ENCODE measurements at regions of chr11 and their contacts with region 1.

Region 1: DNA sequence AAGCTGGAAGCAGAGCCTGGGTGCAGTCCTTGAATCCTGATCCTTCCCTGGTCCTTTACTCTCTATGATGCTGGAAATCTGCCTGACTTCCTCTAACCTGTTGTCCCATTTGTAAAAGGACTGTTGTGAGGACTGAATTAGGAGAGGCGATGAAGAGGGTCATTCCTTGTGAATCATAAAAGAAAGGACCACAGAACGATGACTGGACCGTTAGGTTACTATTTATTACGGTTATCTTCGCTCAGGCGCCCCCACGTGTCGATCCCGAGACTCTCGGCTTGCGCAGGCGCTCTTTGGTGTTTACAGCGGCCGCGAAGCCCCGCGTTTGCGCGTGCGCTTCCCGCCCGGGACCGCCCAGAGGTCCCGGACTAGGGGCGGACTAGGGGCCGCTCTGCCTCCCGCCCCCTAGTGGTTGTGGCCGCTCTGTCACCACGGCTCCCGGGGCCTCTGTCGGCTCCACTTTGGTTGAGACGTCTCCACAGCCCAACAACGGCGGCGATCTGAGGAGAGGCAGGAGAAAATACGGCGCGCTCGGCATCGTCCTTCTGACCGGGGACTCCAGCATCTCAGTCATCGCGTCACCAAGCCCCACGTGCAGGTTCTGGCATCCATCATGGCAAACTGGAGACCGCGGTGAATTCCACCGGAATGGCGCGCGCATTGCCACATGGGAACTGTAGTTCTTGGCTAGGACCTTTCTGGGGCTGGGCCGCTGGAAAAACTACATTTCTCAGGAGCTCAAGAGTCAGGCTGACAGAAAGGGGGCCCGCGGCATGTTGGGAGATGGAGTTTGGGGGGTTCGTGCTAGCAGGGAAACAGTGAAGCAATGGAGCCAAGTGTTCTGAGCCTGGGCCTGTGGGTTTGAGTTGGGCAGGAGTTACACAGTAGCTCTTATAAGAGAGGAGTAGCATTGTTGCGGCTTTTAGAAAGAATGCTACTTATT is at the start of gene STARD10:
- DNase-seq: peak; percentile 94
- ATAC-seq: peak; percentile 93
- H3K4me3 Mint-ChIP-seq: peak within 1 kb of the TSS; percentile 99
- H3K27ac Mint-ChIP-seq: peak within 1 kb of the TSS; percentile 100
- H3K4me1 Mint-ChIP-seq: peaks cover 34% of the 10 kb centered on the region
- H3K27me3 Mint-ChIP-seq: no peaks in the 10 kb centered on the region
- CTCF ChIP-seq: peak; percentile 81
- total RNA-seq, gene STARD10: 42.6 and 46.8 TPM in 2 replicates

Region 2: GRCh38 chr11:72730243-72730642 is 63.5 kb before region 1 on chr11:
- CTCF ChIA-PET with region 1: interaction called, 144 read pairs
- POLR2A ChIA-PET with region 1: interaction called, 57 read pairs
- intact Hi-C with region 1: loop called (anchors 1 kb)
- DNase-seq: no peak
- ATAC-seq: no peak
- H3K4me3 Mint-ChIP-seq: no peak overlapping the region
- H3K27ac Mint-ChIP-seq: peak overlapping the region; percentile 75
- H3K4me1 Mint-ChIP-seq: peaks cover 73% of the 10 kb centered on the region
- H3K27me3 Mint-ChIP-seq: no peaks in the 10 kb centered on the region
- CTCF ChIP-seq: no peak

Region 3: GRCh38 chr11:72752088-72752914 is 41.4 kb before region 1 on chr11 and contains the start of gene ARAP1:
- CTCF ChIA-PET with region 1: interaction called, 3 read pairs
- POLR2A ChIA-PET with region 1: interaction called, 3 read pairs
- intact Hi-C with region 1: loop called (anchors 1 kb)
- DNase-seq: peak; percentile 74
- ATAC-seq: peak; percentile 89
- H3K4me3 Mint-ChIP-seq: peak within 1 kb of the TSS; percentile 91
- H3K27ac Mint-ChIP-seq: peak within 1 kb of the TSS; percentile 89
- H3K4me1 Mint-ChIP-seq: peaks cover 53% of the 10 kb centered on the region
- H3K27me3 Mint-ChIP-seq: no peaks in the 10 kb centered on the region
- CTCF ChIP-seq: no peak
- total RNA-seq, gene ARAP1: 113 and 139 TPM in 2 replicates

Region 4: DNA sequence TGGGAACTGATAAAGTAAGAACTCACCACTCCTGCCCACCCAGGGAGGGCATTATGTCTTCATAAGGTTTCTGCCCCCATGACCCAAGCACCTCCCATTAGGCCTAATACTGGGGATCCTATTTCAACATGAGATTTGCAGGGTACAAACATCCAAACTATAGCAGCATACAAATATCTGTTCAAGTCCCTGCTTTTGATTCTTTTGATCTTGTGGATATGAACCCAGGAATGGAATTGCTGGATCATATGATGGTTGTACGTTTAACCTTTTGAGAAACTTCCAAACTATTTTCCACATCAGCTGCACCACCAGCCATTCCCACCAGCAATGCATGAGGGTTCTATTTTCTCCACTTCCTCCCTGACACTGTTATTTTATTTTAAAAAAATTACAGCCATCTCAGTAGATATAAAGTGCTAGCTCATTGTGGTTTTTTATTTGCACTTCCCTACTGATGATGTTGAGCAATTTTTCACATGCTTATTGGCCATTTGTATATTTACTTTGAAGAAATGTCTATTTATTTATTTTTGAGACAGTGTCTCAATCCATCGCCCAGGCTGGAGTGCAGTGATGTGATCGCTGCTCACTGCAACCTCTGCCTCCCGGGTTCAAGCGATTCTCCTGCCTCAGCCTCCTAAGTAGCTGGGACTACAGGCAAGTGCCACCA is 13.5 kb after region 1 on chr11:
- CTCF ChIA-PET with region 1: interaction called, 4 read pairs
- POLR2A ChIA-PET with region 1: interaction called, 12 read pairs
- intact Hi-C with region 1: no loop called
- DNase-seq: no peak
- ATAC-seq: peak; percentile 36
- H3K4me3 Mint-ChIP-seq: no peak overlapping the region
- H3K27ac Mint-ChIP-seq: no peak overlapping the region
- H3K4me1 Mint-ChIP-seq: peaks cover 26% of the 10 kb centered on the region
- H3K27me3 Mint-ChIP-seq: no peaks in the 10 kb centered on the region
- CTCF ChIP-seq: no peak

Region 5: GRCh38 chr11:72821883-72822799 is 28.4 kb after region 1 on chr11:
- CTCF ChIA-PET with region 1: no interaction called
- POLR2A ChIA-PET with region 1: interaction called, 13 read pairs
- intact Hi-C with region 1: loop called (anchors 2 kb)
- DNase-seq: peak; percentile 90
- ATAC-seq: peak; percentile 82
- H3K4me3 Mint-ChIP-seq: peak overlapping the region; percentile 63
- H3K27ac Mint-ChIP-seq: peak overlapping the region; percentile 95
- H3K4me1 Mint-ChIP-seq: peaks cover 57% of the 10 kb centered on the region
- H3K27me3 Mint-ChIP-seq: no peaks in the 10 kb centered on the region
- CTCF ChIP-seq: no peak

Measured in activated B cell treated with CpG ODN at 0.5 μM for 24 hours (primary cell).